ENCODE measurements at regions of chr11 and their contacts with region 1.

Region 1: DNA sequence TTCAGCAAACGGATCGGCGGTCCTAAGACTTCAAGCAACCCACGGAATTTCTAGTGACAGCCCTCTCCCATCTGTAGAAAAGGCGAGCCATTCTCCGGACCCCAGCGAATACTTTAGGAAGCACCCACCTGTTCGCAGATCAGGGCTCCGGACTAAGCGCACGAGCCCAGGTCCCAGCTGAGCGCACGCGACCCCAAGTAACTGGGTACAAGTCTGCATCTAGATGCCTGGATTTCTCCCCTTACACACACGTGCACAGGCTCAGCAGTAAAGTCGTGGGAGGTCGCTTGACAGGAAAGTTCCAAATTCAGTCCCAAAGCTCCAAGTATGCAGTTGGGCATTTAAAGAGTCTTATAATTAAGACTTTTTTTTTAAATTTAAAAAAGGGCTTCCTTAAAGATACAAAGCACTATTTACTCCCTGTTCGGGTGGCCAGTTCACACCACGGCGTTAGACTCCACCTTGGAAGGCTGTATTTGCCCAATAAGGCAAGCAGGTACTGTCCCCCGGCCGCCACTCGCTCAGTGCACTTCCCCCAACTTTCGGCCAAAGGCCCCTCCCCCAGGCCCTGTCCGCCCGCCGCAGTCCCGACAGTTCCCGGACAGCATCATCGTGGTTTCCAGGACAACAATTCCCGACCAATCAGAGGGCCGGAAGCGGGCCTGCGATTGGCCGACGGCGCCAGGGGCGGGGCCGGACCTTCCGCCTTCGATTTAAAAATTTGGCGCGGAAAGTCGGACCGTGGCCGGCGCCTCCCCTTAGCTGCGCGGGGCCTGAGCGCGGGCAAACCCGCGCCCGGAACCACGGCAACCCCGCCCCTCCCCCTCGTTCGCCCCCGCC is at the start of gene E2F8:
- DNase-seq: peak; percentile 96
- H3K4me3 Mint-ChIP-seq: peak within 1 kb of the TSS; percentile 93
- H3K27ac Mint-ChIP-seq: peak within 1 kb of the TSS; percentile 66
- H3K4me1 Mint-ChIP-seq: peaks cover 15% of the 10 kb centered on the region
- H3K27me3 Mint-ChIP-seq: peaks cover 47% of the 10 kb centered on the region
- total RNA-seq, gene E2F8: 19.5 to 21.2 TPM

Region 2: GRCh38 chr11:18321980-18322711 is 918.5 kb before region 1 on chr11 and contains the starts of genes GTF2H1 and HPS5:
- CTCF ChIA-PET with region 1: no interaction called
- intact Hi-C with region 1: loop called (anchors 2 kb)
- DNase-seq: peak; percentile 98
- H3K4me3 Mint-ChIP-seq: peak within 1 kb of the TSS; percentile 98
- H3K27ac Mint-ChIP-seq: peak within 1 kb of the TSS; percentile 100
- H3K4me1 Mint-ChIP-seq: peaks cover 64% of the 10 kb centered on the region
- H3K27me3 Mint-ChIP-seq: no peaks in the 10 kb centered on the region
- total RNA-seq, gene GTF2H1: 33.4 to 34.1 TPM
- total RNA-seq, gene HPS5: 21.7 to 21.9 TPM

Region 3: GRCh38 chr11:18634140-18635032 is 606.3 kb before region 1 on chr11 and contains the start of gene SPTY2D1:
- CTCF ChIA-PET with region 1: no interaction called
- intact Hi-C with region 1: loop called (anchors 1 kb)
- DNase-seq: peak; percentile 99
- H3K4me3 Mint-ChIP-seq: peak within 1 kb of the TSS; percentile 87
- H3K27ac Mint-ChIP-seq: peak within 1 kb of the TSS; percentile 96
- H3K4me1 Mint-ChIP-seq: peaks cover 30% of the 10 kb centered on the region
- H3K27me3 Mint-ChIP-seq: no peaks in the 10 kb centered on the region
- total RNA-seq, gene SPTY2D1: 13.9 to 15.0 TPM

Region 4: GRCh38 chr11:19116971-19117750 is 123.5 kb before region 1 on chr11 and contains the start of gene ZDHHC13:
- CTCF ChIA-PET with region 1: no interaction called
- intact Hi-C with region 1: loop called (anchors 1 kb)
- DNase-seq: peak; percentile 98
- H3K4me3 Mint-ChIP-seq: peak within 1 kb of the TSS; percentile 89
- H3K27ac Mint-ChIP-seq: peak within 1 kb of the TSS; percentile 79
- H3K4me1 Mint-ChIP-seq: peaks cover 49% of the 10 kb centered on the region
- H3K27me3 Mint-ChIP-seq: no peaks in the 10 kb centered on the region
- total RNA-seq, gene ZDHHC13: 20.9 to 25.1 TPM

Region 5: DNA sequence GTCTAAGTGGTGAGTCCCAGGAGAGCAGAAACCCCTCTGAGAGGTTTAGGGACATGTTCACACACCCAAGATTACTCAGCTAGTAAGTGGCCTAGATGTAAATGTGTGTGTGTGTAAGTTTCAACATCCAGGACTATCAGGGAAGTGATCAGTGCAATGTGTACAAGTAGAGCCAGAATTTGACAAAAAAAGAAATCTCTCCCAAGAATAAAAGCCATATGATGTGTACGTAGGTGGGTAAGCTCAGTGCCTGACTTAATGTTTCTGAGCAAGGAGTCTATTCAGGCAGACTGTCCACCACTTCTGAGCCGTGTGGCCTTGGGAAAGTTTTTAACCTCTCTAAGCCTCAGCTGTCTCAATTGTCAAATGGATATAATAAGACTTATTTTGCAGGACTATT is 338.2 kb after region 1 on chr11:
- CTCF ChIA-PET with region 1: no interaction called
- intact Hi-C with region 1: no loop called
- DNase-seq: no peak
- H3K4me3 Mint-ChIP-seq: no peak overlapping the region
- H3K27ac Mint-ChIP-seq: no peak overlapping the region
- H3K4me1 Mint-ChIP-seq: no peaks in the 10 kb centered on the region
- H3K27me3 Mint-ChIP-seq: no peaks in the 10 kb centered on the region

Region 6: DNA sequence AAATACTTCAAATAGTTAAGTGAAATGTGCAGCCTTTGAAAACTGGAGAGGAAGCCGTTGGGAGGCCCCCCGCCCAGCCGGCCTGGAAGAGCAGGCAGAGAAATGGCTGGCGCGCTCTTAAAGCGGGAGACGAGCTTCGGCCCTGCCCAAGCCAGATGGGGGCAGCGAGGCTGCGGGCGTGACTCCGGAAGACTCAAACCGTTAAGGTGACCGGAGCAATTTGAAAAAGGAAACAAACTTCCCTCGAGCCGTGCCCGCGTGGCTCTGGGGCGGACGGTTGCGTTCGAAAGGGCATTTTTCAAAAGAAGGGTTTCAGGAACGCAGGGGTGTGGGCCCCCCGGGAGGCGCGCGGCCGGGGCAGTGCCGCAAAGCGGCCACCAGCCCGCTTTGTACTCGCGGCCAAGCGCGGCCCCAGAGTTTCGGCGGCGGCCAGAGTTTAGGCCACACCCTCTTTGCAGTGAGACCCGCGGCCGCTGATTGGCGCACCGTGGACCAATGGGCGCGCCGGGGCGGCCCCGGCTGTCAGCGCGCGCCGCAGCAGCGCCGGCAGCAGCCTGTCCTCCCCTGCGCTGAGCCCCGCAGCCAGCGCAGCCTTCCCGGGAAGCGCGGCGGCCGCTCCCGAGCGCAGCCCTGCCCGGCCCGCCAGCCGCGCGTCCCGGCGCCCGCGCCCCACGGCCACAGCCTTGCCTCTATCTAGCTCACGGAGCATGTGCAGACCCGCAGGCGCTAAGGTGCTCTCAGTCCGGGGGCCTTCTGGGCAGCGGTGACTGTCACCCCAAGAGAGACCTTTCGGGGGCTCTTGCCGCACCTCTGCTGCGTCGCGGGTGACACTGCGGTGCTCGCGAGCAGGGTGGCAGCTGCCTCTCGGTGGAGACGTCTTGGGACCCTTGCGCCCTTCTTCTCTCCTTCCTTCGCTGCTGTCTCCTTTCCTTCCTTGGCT is 471.9 kb after region 1 on chr11 and contains the start of gene NAV2:
- CTCF ChIA-PET with region 1: no interaction called
- intact Hi-C with region 1: loop called (anchors 1 kb)
- DNase-seq: peak; percentile 72
- H3K4me3 Mint-ChIP-seq: peak within 1 kb of the TSS; percentile 81
- H3K27ac Mint-ChIP-seq: peak within 1 kb of the TSS; percentile 53
- H3K4me1 Mint-ChIP-seq: peaks cover 18% of the 10 kb centered on the region
- H3K27me3 Mint-ChIP-seq: peaks cover 44% of the 10 kb centered on the region
- total RNA-seq, gene NAV2: 0.20 to 0.41 TPM

Region 7: GRCh38 chr11:20363500-20364411 is 1123.1 kb after region 1 on chr11 and contains the start of gene HTATIP2:
- CTCF ChIA-PET with region 1: no interaction called
- intact Hi-C with region 1: loop called (anchors 5 kb)
- DNase-seq: peak; percentile 75
- H3K4me3 Mint-ChIP-seq: peak within 1 kb of the TSS; percentile 82
- H3K27ac Mint-ChIP-seq: peak within 1 kb of the TSS; percentile 91
- H3K4me1 Mint-ChIP-seq: peaks cover 68% of the 10 kb centered on the region
- H3K27me3 Mint-ChIP-seq: no peaks in the 10 kb centered on the region
- total RNA-seq, gene HTATIP2: 78.3 to 80.7 TPM

Measured in activated naive CD4-positive, alpha-beta T cell treated with anti-CD3 and anti-CD28 coated beads for 36 hours (primary cell).